ENCODE measurements at regions of chr19 and their contacts with region 1.

Region 1: DNA sequence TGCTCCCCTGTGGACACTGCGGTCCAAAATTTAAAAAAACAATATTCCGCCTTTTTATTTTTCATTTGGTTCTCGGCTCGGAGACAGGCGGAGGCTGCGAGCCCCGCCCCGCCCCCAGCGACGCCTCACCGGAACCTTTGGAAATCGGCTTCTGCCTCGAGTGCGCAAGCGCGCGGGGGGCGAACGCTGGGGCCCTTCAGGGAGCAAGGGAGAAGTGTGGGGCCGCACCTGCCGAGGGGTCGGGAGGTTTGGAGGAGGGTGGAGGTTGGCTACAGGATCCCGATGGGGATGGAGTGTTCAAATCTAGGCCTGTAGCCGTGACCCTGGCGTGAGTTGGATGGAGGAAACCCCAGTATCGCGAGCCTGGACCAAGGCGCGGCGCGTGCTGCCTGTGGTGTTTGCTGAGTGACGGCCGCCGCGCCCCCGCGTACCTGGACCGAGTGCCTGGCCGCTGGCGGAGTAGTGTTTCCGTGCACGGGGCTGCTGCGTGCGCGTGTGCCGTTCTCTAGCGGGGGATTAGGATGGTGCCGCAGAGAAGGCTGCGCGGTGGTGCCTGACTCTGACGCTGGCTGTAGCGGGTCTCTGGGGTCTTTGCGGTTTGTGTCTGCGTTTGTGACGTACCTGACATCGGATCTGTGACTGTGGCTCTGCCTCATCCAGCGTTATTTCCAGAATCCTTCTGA is 565 bp upstream of the ZFP30 start:
- DNase-seq: peak; percentile 63 to 81
- ATAC-seq: peak; percentile 85 to 93
- H3K4me3 ChIP-seq: peak overlapping the region; percentile 75 to 94 (median 84)
- H3K27ac ChIP-seq: peak overlapping the region; percentile 90 to 94 (median 93)
- H3K4me1 ChIP-seq: peaks cover 21 to 22% of the 10 kb centered on the region in 2 donors
- H3K27me3 ChIP-seq: no peaks in the 10 kb centered on the region
- CTCF ChIP-seq: peak in 1 of 5 experiments; percentile 31
- POLR2A ChIP-seq: peak; percentile 29 to 32

Region 2: DNA sequence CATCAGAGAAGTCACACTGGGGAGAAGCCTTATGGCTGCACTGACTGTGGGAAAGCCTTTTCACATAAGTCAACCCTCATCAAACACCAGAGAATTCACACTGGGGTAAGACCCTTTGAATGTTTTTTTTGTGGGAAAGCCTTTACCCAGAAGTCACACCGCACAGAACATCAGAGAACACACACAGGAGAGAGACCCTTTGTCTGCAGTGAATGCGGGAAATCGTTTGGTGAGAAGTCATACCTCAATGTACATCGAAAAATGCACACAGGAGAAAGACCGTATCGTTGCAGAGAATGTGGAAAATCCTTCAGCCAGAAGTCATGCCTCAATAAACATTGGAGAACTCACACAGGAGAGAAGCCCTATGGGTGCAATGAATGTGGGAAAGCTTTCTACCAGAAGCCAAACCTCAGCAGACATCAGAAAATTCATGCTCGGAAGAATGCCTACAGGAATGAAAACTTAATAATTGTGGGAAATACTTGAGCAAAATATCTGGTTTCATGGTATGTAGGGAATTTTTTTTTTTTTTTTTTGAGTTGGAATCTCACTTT is 118.4 kb before region 1 on chr19:
- in situ Hi-C with region 1: no loop called
- intact Hi-C with region 1: no loop called
- DNase-seq: no peak
- ATAC-seq: no peak
- H3K4me3 ChIP-seq: peak overlapping the region in 1 of 4 donors; percentile 30
- H3K27ac ChIP-seq: no peak overlapping the region
- H3K4me1 ChIP-seq: no peaks in the 10 kb centered on the region
- H3K27me3 ChIP-seq: no peaks in the 10 kb centered on the region
- CTCF ChIP-seq: no peak
- POLR2A ChIP-seq: no peak

Region 3: GRCh38 chr19:37594304-37594981 is 61.4 kb before region 1 on chr19 and contains the starts of genes ZNF540 and ZNF571:
- in situ Hi-C with region 1: no loop called
- intact Hi-C with region 1: loop called (anchors 1 kb)
- DNase-seq: peak; percentile 85 to 89
- ATAC-seq: peak; percentile 98 to 99
- H3K4me3 ChIP-seq: peak within 1 kb of the TSS; percentile 78 to 95 (median 86)
- H3K27ac ChIP-seq: peak within 1 kb of the TSS; percentile 87 to 95 (median 90)
- H3K4me1 ChIP-seq: peaks cover 17 to 19% of the 10 kb centered on the region in 2 donors
- H3K27me3 ChIP-seq: no peaks in the 10 kb centered on the region
- CTCF ChIP-seq: no peak
- POLR2A ChIP-seq: peak; percentile 61 to 63
- total RNA-seq, gene ZNF540: 0.46 to 1.5 (median 1.3) TPM
- total RNA-seq, gene ZNF571: 1.5 to 2.5 (median 1.8) TPM

Region 4: GRCh38 chr19:37691881-37692504 is 36.2 kb after region 1 on chr19:
- in situ Hi-C with region 1: no loop called
- intact Hi-C with region 1: loop called (anchors 1 kb)
- DNase-seq: peak; percentile 38 to 41
- ATAC-seq: peak; percentile 63 to 75
- H3K4me3 ChIP-seq: peak overlapping the region; percentile 64 to 75 (median 68)
- H3K27ac ChIP-seq: peak overlapping the region; percentile 71 to 84 (median 75)
- H3K4me1 ChIP-seq: no peaks in the 10 kb centered on the region
- H3K27me3 ChIP-seq: no peaks in the 10 kb centered on the region
- CTCF ChIP-seq: no peak
- POLR2A ChIP-seq: no peak

Region 5: GRCh38 chr19:37719111-37719926 is 63.5 kb after region 1 on chr19 and contains the start of gene ZNF607:
- in situ Hi-C with region 1: no loop called
- intact Hi-C with region 1: loop called (anchors 2 kb)
- DNase-seq: peak; percentile 64 to 75
- ATAC-seq: peak; percentile 89 to 97
- H3K4me3 ChIP-seq: peak within 1 kb of the TSS; percentile 67 to 88 (median 82)
- H3K27ac ChIP-seq: peak within 1 kb of the TSS; percentile 54 to 77 (median 70)
- H3K4me1 ChIP-seq: peaks cover 6 to 13% of the 10 kb centered on the region in 2 donors
- H3K27me3 ChIP-seq: no peaks in the 10 kb centered on the region
- CTCF ChIP-seq: peak in 4 of 5 experiments; percentile 3 to 48 (median 46)
- POLR2A ChIP-seq: peak; percentile 29 to 44
- total RNA-seq, gene ZNF607: 0.62 to 2.7 (median 1.5) TPM

Region 6: DNA sequence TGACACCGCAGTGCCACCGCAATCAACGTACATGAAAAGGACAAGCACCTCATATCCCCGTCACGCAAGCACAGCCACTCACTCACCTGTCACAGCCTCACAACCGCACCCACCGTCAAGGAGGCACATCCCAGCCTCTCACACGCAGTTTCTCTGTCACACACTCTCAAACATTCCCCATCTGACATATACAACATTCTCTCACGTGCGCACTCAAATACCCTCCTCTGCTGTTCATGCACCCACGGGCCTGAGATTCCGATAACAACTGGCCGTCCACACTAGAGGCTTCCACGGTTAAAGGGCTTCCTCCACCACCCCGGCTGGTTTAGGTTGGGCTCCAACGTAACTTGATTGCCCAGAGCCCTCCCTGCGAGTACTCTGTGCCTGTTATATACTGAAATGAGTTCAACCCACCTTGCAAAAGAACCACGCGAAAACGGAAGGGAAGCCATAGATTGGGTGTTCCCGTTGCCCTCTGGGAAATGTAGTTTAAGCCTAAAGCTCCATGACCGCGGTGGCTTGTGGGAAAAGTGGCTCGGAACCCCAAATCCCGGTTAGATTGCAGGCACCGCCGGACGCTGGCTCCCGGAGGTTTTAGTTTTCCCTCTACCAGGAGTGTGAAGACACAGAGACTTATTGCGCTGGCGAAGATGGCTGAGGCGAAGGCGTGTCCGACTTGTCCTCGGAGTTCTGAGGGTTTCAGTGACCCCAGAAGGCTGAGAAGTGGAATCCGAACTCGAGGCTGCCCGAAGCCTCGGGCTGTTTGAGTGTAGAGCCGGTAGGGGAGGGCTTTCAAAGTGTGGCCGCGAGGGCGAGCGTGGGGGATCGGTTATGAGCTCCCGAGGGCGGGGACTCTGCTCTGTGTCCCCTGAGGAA is 123.5 kb after region 1 on chr19 and contains the start of gene ZNF573:
- in situ Hi-C with region 1: no loop called
- intact Hi-C with region 1: loop called (anchors 1 kb)
- DNase-seq: peak; percentile 73 to 78
- ATAC-seq: peak; percentile 99
- H3K4me3 ChIP-seq: peak within 1 kb of the TSS; percentile 72 to 99 (median 84)
- H3K27ac ChIP-seq: peak within 1 kb of the TSS; percentile 83 to 89 (median 88)
- H3K4me1 ChIP-seq: peaks cover 0 to 13% of the 10 kb centered on the region in 2 donors
- H3K27me3 ChIP-seq: no peaks in the 10 kb centered on the region
- CTCF ChIP-seq: peak in 1 of 5 experiments; percentile 18
- POLR2A ChIP-seq: peak; percentile 43 to 65
- total RNA-seq, gene ZNF573: 2.6 to 12.8 (median 5.6) TPM

Measured in gastrocnemius medialis (tissue), 4 donors.